K562 (cell line): ENCODE measurements at regions of chr1 and their contacts with region 1.

Region 1: GRCh38 chr1:201559679-201560162 is 20.8 kb downstream of the NAV1 start:
- DNase-seq: peak; percentile 92 to 96 (median 94)
- ATAC-seq: peak; percentile 95
- H3K4me3 ChIP-seq: no peak overlapping the region
- H3K27ac ChIP-seq: no peak overlapping the region
- H3K4me1 ChIP-seq: peaks cover 16 to 20% of the 10 kb centered on the region in 2 experiments
- H3K27me3 ChIP-seq: no peaks in the 10 kb centered on the region
- CTCF ChIP-seq: peak; percentile 99 to 100 (median 99)
- EP300 ChIP-seq: peak; percentile 53
- POLR2A ChIP-seq: no peak
- RAD21 ChIP-seq: peak; percentile 100

Region 2: DNA sequence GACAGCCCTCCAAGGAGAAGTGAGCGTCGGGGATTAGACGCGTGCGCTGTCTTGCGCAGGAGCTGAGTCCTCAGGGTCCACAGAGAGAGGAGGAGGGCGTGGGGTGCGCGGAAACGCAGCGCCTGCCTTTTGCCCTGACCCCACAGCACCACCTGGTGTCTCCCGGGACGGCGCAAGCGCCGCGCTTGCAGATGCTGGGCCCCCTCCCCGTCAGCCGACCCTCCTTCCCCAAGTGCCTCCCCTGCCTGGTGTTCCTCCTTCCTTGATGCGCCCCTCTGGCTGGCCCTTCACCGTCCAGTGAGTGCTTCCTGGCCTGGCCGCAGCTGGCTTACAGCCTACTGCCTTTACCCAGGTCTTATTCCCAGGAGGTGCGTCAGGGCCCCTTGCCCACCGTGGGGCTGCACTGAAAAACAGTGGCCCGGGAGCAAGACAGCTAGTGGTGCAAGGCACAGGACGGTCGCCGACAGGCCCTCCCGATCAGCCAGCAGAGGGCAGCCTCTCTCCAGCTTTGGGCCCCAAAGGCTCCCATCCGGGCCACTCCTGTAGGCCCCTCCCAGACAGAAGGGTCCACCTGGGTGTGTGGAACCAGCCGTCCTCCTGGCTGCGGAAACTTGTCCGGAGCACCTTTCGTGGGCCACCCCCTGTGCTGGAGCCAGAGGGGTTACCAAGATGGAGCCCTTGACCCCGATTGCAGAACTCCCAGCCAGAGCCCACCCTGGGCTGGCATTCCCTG is 77.8 kb before region 1 on chr1:
- CTCF ChIA-PET with region 1: no interaction called
- POLR2A ChIA-PET with region 1: interaction called, 3 read pairs
- in situ Hi-C with region 1: no loop called
- intact Hi-C with region 1: loop called (anchors 1 kb)
- DNase-seq: peak; percentile 92 to 93 (median 92)
- ATAC-seq: peak; percentile 91
- H3K4me3 ChIP-seq: no peak overlapping the region
- H3K27ac ChIP-seq: no peak overlapping the region
- H3K4me1 ChIP-seq: peaks cover 20 to 25% of the 10 kb centered on the region in 2 experiments
- H3K27me3 ChIP-seq: peaks cover 0 to 4% of the 10 kb centered on the region in 2 experiments; a peak in 1 of 5 replicates
- CTCF ChIP-seq: peak; percentile 98
- EP300 ChIP-seq: no peak
- POLR2A ChIP-seq: no peak
- RAD21 ChIP-seq: peak; percentile 96 to 97

Region 3: GRCh38 chr1:201582705-201583442 is 23.2 kb after region 1 on chr1:
- CTCF ChIA-PET with region 1: no interaction called
- POLR2A ChIA-PET with region 1: interaction called, 4 read pairs
- in situ Hi-C with region 1: no loop called
- intact Hi-C with region 1: loop called (anchors 1 kb)
- DNase-seq: peak; percentile 52 to 87 (median 70)
- ATAC-seq: peak; percentile 61
- H3K4me3 ChIP-seq: no peak overlapping the region
- H3K27ac ChIP-seq: peak overlapping the region; percentile 49
- H3K4me1 ChIP-seq: peaks cover 34 to 53% of the 10 kb centered on the region in 2 experiments
- H3K27me3 ChIP-seq: no peaks in the 10 kb centered on the region
- CTCF ChIP-seq: no peak
- EP300 ChIP-seq: no peak; the same call in 1 of the 2 replicates
- POLR2A ChIP-seq: no peak
- RAD21 ChIP-seq: no peak

Region 4: GRCh38 chr1:201709564-201710295 is 150.0 kb after region 1 on chr1:
- CTCF ChIA-PET with region 1: interaction called, 138 read pairs
- POLR2A ChIA-PET with region 1: interaction called, 9 read pairs
- in situ Hi-C with region 1: loop called (anchors 5 kb)
- intact Hi-C with region 1: loop called (anchors 1 kb)
- DNase-seq: peak; percentile 79 to 89 (median 85)
- ATAC-seq: peak; percentile 98
- H3K4me3 ChIP-seq: no peak overlapping the region
- H3K27ac ChIP-seq: no peak overlapping the region
- H3K4me1 ChIP-seq: peaks cover 12 to 23% of the 10 kb centered on the region in 2 experiments; a peak in 4 of 5 replicates
- H3K27me3 ChIP-seq: peaks cover 0 to 4% of the 10 kb centered on the region in 2 experiments; a peak in 1 of 5 replicates
- CTCF ChIP-seq: peak; percentile 92 to 94 (median 94)
- EP300 ChIP-seq: no peak
- POLR2A ChIP-seq: no peak
- RAD21 ChIP-seq: peak; percentile 91 to 93

Region 5: GRCh38 chr1:201739492-201740085 is 179.9 kb after region 1 on chr1:
- CTCF ChIA-PET with region 1: no interaction called
- POLR2A ChIA-PET with region 1: no interaction called
- in situ Hi-C with region 1: no loop called
- intact Hi-C with region 1: no loop called
- DNase-seq: peak in 1 of 4 experiments; percentile 27
- ATAC-seq: peak; percentile 82
- H3K4me3 ChIP-seq: no peak overlapping the region
- H3K27ac ChIP-seq: no peak overlapping the region
- H3K4me1 ChIP-seq: peaks cover 4 to 14% of the 10 kb centered on the region in 2 experiments; a peak in 4 of 5 replicates
- H3K27me3 ChIP-seq: peaks cover 17 to 45% of the 10 kb centered on the region in 2 experiments
- CTCF ChIP-seq: 0 out of 6 replicates have a peak, but pooled peaks of 1 of the 3 experiments have one; percentile 3
- EP300 ChIP-seq: no peak
- POLR2A ChIP-seq: no peak
- RAD21 ChIP-seq: no peak

Region 6: GRCh38 chr1:201792534-201793305 is 233.0 kb after region 1 on chr1:
- CTCF ChIA-PET with region 1: interaction called, 33 read pairs
- POLR2A ChIA-PET with region 1: interaction called, 4 read pairs
- in situ Hi-C with region 1: no loop called
- intact Hi-C with region 1: loop called (anchors 1 kb)
- DNase-seq: peak; percentile 80 to 86 (median 84)
- ATAC-seq: peak; percentile 98
- H3K4me3 ChIP-seq: no peak overlapping the region
- H3K27ac ChIP-seq: no peak overlapping the region
- H3K4me1 ChIP-seq: no peaks in the 10 kb centered on the region
- H3K27me3 ChIP-seq: no peaks in the 10 kb centered on the region; a peak in 1 of 5 replicates
- CTCF ChIP-seq: peak; percentile 95 to 99 (median 98)
- EP300 ChIP-seq: no peak
- POLR2A ChIP-seq: no peak
- RAD21 ChIP-seq: peak; percentile 97 to 99